Vagina (tissue), 2 donors: ENCODE measurements at regions of chr19 and their contacts with region 1.

Region 1: DNA sequence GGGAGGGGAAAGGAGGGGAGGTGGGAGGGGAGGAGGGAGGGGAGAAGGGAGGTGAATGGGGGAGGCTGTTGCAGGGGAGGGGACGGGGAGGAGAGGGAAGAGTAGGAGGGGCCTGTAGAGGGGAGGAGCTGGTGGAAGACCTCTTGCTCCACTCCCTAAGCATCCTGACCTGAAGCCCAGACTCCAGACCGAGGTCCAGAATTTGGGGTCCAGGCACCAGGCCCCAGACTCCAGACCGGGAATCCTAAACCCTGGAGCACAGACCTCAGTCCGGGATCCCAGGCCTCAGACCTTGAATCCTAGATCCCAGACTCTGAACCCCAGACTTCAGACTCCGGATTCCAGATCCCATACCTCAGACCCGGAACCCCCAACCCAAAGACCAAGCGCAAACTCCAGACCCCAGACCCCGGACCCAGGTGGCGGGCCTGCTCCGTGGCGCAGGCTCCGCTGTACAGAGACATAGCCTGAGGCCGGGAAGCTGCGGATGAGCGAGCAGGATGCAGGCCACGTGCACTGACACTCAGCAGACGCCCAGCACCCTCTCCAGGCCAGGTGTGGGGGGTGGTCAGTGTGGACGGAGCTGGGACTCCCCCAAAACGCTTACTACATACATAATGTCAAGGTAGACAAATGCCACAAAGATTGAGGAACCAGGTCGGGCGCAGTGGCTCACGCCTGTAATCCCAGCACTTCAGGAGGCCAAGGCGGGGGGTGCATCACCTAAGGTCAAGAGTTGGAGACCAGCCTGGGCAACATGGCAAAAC is 710 bp upstream of the BTBD2 start:
- DNase-seq: peak in 1 of 2 donors; percentile 94
- H3K4me3 ChIP-seq: peak overlapping the region; percentile 44 to 78
- H3K27ac ChIP-seq: peak overlapping the region; percentile 90
- H3K4me1 ChIP-seq: peaks cover 29% of the 10 kb centered on the region
- H3K27me3 ChIP-seq: no peaks in the 10 kb centered on the region
- CTCF ChIP-seq: no peak
- POLR2A ChIP-seq: no peak

Region 2: DNA sequence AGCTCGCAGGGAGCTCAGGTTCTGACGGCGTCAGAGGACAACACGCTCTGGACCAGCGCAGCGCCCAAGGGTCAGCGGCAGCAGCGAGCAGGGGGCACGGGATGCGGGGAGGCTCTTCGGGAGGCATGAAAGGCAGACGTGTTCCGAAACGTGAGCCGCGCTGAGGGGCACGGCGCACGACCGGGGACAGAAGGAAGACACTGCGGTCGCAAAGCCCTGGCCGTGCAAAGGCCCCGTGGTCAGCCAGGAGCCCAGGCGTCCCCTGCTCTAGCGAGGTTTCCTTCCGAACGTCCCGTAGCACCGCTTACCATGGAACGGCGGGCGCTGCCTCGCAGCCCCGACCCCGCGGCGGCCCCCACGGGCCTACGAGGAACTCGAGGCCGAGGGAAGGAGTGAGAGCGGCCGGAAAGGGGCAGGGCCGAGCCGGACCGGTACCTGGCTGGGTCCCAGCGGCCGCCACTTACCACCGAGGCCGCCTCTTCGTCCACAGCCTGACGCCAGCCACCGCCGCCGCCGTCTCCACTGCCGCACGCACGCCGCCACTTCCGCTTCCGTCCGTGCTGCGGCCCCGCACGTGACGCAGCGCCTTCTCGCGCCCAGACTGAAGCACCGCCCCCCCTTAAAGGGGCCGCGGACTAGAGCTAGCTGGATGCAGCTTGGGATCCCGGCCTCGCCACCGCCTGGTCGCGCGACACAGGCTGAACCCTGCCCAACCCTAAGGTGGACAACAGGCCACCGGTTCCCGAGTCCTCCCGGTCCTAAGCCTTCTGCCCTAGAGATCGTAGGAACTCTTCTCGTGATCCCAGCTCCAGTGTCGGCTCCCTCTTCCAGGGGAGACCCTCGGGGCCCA is 140.4 kb before region 1 on chr19:
- intact Hi-C with region 1: loop called (anchors 10 kb)
- DNase-seq: peak in 1 of 2 donors; percentile 96
- H3K4me3 ChIP-seq: peak overlapping the region; percentile 81 to 87
- H3K27ac ChIP-seq: peak overlapping the region; percentile 85
- H3K4me1 ChIP-seq: peaks cover 62% of the 10 kb centered on the region
- H3K27me3 ChIP-seq: no peaks in the 10 kb centered on the region
- CTCF ChIP-seq: no peak
- POLR2A ChIP-seq: peak in 1 of 2 donors; percentile 68

Region 3: GRCh38 chr19:1956868-1957492 is 59.2 kb before region 1 on chr19:
- intact Hi-C with region 1: no loop called
- DNase-seq: no peak
- H3K4me3 ChIP-seq: no peak overlapping the region
- H3K27ac ChIP-seq: no peak overlapping the region
- H3K4me1 ChIP-seq: peaks cover 17% of the 10 kb centered on the region
- H3K27me3 ChIP-seq: no peaks in the 10 kb centered on the region
- CTCF ChIP-seq: no peak
- POLR2A ChIP-seq: no peak

Region 4: GRCh38 chr19:2061495-2062381 is 45.5 kb after region 1 on chr19:
- intact Hi-C with region 1: loop called (anchors 2 kb)
- DNase-seq: peak in 1 of 2 donors; percentile 99
- H3K4me3 ChIP-seq: peak overlapping the region; percentile 56 to 93
- H3K27ac ChIP-seq: peak overlapping the region; percentile 99
- H3K4me1 ChIP-seq: peaks cover 60% of the 10 kb centered on the region
- H3K27me3 ChIP-seq: no peaks in the 10 kb centered on the region
- CTCF ChIP-seq: no peak
- POLR2A ChIP-seq: no peak

Region 5: DNA sequence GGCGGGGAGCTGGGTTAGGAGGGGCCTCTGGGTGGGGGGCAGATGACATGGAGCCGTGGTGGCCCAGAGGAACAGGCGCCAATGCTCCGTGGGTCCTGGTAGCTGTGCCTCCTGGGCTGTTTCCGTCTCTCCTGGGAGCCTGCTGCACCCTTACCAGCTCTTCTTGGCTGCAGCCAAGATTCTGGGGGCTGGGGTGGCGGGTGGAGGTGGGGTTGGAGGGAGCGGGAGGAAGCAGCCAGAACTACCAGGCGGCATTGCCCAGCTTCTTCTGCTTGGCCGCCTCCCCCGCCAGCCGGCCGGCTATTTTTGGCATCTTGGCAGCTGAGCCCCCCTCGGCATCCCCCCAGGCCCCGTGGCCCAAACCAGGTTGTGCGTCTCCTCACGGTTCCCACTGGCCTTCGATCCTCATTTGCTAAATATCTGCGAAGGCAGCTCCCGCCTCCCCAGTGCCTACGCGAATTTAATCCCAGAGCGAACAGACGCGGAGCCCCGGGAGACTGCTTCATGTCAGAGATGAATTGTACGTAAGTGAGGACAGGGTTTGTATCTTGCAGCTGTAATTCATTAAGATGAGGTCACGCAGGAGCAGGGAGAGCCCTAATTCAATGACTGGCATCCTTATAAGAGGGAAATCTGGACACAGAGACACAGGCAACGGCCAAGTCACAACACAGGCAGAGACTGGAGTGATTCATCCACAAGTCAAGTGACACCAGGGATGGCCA is 278.5 kb after region 1 on chr19:
- intact Hi-C with region 1: no loop called
- DNase-seq: no peak
- H3K4me3 ChIP-seq: peak overlapping the region in 1 of 2 donors; percentile 10
- H3K27ac ChIP-seq: no peak overlapping the region
- H3K4me1 ChIP-seq: peaks cover 32% of the 10 kb centered on the region
- H3K27me3 ChIP-seq: peaks cover 8% of the 10 kb centered on the region
- CTCF ChIP-seq: no peak
- POLR2A ChIP-seq: no peak